H1 (cell line): ENCODE measurements at regions of chr12 and their contacts with region 1.

Region 1: DNA sequence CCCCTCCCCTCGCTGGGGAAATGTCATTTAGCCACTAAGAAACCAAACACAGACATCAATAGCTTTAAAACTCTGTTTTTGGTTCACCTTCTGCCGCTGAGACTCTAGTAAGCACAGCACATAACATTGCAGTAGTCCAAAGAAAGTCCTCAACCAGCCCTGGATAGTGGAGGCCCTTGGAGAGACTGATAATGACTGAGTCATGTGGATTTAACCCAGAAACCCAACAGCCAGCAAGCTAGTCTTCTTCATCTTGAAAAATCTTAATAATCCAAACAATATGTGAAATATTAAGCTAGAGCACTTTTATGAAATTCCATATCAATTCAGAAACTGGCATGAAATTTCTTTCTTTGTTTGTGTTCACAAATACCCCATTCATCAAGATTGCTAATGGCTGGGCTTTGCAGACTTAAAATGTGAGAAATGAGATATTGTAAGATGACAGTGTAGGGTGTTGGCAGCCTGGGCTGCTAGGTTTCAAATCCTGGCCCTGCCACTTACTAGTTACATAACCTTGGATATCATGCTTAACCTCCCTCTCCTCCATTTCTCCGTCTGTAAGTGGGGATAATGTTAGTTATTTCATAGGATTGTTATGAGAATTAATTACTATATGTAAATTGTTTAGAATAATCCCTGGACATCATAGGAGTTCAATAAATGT is 40.1 kb downstream of the RERG start:
- DNase-seq: no peak
- H3K4me3 ChIP-seq: no peak overlapping the region
- H3K27ac ChIP-seq: no peak overlapping the region
- H3K4me1 ChIP-seq: no peaks in the 10 kb centered on the region
- H3K27me3 ChIP-seq: no peaks in the 10 kb centered on the region
- CTCF ChIP-seq: no peak
- EP300 ChIP-seq: no peak
- POLR2A ChIP-seq: no peak
- RAD21 ChIP-seq: no peak

Region 2: GRCh38 chr12:15165012-15165659 is 16.0 kb before region 1 on chr12:
- CTCF ChIA-PET with region 1: interaction called, 10 read pairs
- POLR2A ChIA-PET with region 1: no interaction called
- DNase-seq: no peak
- H3K4me3 ChIP-seq: no peak overlapping the region
- H3K27ac ChIP-seq: no peak overlapping the region
- H3K4me1 ChIP-seq: no peaks in the 10 kb centered on the region
- H3K27me3 ChIP-seq: no peaks in the 10 kb centered on the region
- CTCF ChIP-seq: no peak
- EP300 ChIP-seq: no peak
- POLR2A ChIP-seq: no peak
- RAD21 ChIP-seq: no peak

Region 3: DNA sequence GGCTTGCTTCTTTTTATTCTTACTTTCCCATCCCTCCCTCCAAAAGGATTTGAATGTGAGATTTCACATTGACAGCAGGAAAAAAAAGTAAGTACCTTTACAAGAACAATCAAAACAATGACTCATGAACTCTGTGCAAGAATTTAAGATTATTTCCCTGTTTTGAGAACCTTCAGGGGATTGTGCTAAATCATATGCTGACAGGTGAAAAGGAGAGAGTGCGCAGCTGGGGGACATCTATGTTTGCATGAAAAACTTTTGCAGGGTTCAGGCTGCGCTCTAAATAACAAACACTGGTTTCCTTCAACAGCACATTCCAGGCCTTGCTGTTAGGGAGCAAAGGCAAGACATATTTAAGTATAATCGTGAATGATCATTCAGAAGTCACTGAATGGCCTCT is 12.8 kb after region 1 on chr12:
- CTCF ChIA-PET with region 1: interaction called, 15 read pairs
- POLR2A ChIA-PET with region 1: no interaction called
- DNase-seq: no peak
- H3K4me3 ChIP-seq: no peak overlapping the region
- H3K27ac ChIP-seq: no peak overlapping the region
- H3K4me1 ChIP-seq: no peaks in the 10 kb centered on the region
- H3K27me3 ChIP-seq: no peaks in the 10 kb centered on the region
- CTCF ChIP-seq: no peak
- EP300 ChIP-seq: no peak
- POLR2A ChIP-seq: no peak
- RAD21 ChIP-seq: no peak